Activated CD4-positive, alpha-beta memory T cell treated with anti-CD3 and anti-CD28 coated beads for 36 hours (primary cell): ENCODE measurements at regions of chr1 and their contacts with region 1.

Region 1: DNA sequence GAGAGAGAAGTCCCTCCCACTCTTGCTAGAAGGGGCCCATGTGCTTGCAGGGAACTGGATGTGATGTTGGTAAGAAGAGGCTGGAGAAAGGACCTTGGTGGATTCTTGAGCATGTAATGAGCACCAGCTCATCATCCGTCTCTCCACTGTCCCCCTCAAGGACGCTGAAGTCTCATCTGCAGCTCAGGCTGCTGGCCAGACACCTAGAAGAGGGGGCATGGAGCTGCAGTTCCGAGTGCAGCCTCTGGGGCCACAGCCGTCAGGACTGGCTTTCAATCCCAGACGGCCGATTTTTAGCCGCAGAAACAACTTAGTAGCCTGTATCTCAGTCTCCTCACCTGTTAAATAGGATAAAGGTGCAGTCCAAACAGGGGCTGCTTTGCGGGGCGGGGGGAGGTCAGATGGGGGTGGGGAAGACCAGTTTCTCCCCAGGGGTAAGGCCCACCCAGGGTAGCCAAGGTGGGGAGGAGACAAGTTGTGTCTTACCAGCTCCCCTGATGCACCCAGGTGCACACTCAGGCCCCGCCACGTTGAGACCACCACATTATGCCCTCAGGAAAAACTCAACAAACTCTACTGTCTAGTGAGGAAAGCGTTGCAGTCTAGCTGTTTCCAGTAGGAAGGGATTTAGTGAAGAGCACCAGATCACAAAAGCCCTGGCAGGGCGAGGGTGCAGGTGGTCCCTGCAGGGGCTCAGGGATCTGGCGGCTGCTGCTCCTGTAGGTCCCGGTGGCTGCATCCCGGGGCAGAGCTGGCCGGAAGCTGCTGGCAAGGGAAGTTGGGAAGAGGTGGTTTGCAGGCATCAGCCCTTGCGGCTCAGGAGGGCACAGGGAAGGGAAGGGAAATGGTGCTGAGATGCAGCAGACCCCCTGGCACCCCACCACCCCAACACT is 29.5 kb downstream of the LDLRAP1 start:
- DNase-seq: peak; percentile 66
- H3K4me3 Mint-ChIP-seq: no peak overlapping the region
- H3K27ac Mint-ChIP-seq: no peak overlapping the region
- H3K4me1 Mint-ChIP-seq: peaks cover 23% of the 10 kb centered on the region
- H3K27me3 Mint-ChIP-seq: no peaks in the 10 kb centered on the region

Region 2: DNA sequence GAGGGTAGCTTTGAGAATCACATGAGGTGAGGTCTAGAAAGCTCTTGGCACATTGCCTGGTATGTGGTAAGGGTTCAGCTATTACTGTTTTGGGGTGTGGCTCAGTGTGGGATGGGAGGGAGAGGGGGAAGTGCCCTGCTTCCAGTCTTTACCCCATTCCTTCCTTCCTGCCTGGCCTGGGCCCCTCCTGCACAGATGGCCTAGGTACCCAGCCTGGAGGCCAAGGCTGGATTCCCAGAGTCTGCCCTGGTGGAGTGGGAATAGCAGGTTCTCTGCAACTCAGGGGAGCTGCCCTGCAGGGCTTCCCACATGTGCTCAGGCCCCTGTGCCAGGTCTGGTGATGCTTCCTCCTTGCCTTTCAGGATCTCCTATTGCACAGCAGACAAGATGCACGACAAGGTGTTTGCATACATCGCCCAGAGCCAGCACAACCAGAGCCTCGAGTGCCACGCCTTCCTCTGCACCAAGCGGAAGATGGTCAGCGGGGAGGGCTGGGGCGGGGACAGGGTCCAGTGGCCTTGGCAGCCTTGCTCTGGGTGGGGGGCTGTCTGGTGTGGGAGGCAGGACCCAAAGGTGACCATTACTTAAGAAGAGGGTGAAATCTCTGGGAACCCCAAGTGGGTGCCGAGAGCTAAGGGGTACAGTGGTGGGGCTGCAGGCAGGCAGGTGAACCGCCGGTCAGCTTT is 16.0 kb before region 1 on chr1:
- CTCF ChIA-PET with region 1: interaction called, 23 read pairs
- POLR2A ChIA-PET with region 1: interaction called, 3 read pairs
- intact Hi-C with region 1: no loop called
- DNase-seq: peak; percentile 64
- H3K4me3 Mint-ChIP-seq: no peak overlapping the region
- H3K27ac Mint-ChIP-seq: peak overlapping the region; percentile 38
- H3K4me1 Mint-ChIP-seq: peaks cover 91% of the 10 kb centered on the region
- H3K27me3 Mint-ChIP-seq: no peaks in the 10 kb centered on the region